Common myeloid progenitor, CD34-positive (primary cell): ENCODE measurements at regions of chr11 and their contacts with region 1.

Region 1: DNA sequence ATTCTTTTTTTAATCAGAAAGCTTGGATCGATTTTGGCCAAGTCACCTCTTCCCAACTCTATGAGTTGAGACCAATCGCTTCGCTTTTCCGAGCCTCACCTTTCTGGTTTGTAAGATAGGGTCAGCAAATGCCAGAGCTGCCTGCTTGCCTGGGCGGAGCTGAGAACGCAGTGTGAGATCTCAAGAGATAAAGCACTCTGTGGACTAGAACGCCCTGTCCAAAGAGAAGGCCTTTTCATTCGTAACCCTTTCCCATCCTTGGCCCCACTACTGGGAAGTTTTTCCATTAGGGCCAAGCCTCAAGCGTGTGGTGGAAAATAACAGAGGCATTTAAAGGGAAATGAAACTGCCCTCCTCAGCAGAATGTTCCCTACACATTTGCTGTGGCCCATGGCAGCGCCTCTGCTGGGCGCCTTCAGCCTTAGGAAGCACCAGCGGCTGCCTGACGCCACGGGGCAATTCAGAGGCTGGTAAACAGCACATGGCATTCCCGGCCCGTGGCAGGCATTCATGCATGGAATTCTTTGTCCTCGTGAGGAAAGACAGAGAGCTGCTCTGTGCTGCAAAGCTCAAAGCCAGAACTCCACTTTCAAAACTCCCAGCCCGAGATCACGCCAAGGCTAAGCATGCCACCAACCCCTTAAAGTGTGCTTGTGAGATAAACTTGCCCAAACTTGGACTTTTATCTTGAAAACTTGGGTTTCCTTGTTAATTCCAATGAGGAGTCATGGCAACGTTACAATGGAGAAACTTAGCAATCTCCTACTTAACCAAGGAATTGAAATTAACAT is 38.1 kb downstream of the AHNAK start:
- DNase-seq: peak in 1 of 3 donors; percentile 46
- H3K4me3 ChIP-seq: peak overlapping the region in 3 of 7 experiments; percentile 32 to 65 (median 38)
- H3K27ac ChIP-seq: peak overlapping the region in 1 of 2 experiments; percentile 3
- H3K4me1 ChIP-seq: peaks cover 3 to 8% (median 5%) of the 10 kb centered on the region in 4 experiments
- H3K27me3 ChIP-seq: peaks cover 0 to 3% (median 0%) of the 10 kb centered on the region in 5 experiments

Region 2: DNA sequence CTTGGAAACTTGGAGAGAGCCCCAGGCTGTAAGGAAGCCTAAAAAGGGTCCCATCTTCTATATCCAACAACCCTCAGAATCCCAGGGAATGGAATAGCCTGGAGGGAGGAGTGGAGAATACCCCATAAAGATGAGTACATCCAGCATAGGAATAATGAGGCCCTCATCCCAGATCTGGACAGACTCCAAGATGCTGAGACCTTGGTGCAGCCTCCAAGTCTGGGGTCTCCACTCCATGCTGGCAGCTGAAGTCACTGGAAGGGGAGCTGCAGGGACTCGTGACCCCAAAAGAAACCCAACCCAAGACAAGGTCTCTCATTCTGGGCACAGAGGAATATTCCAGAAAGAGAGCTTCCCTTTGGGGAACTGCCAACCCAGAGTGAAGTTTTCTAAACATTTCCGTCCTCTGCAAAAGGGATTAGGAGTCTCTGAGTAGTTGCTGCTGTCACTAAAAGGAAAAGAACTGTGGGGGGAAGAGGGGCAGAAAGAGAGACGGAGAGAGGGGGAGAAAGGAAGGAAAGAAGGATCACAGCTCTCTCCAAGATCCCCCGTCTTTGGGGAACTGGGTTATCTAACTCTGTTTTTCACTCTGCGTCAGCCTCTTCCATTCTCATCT is 89.0 kb before region 1 on chr11:
- CTCF ChIA-PET with region 1: interaction called, 11 read pairs
- POLR2A ChIA-PET with region 1: no interaction called
- DNase-seq: no peak
- H3K4me3 ChIP-seq: no peak overlapping the region
- H3K27ac ChIP-seq: peak overlapping the region in 1 of 2 experiments; percentile 34
- H3K4me1 ChIP-seq: peaks cover 0 to 3% (median under 1%) of the 10 kb centered on the region in 4 experiments
- H3K27me3 ChIP-seq: no peaks in the 10 kb centered on the region

Region 3: GRCh38 chr11:62497132-62497915 is 11.1 kb before region 1 on chr11:
- CTCF ChIA-PET with region 1: interaction called, 19 read pairs
- POLR2A ChIA-PET with region 1: no interaction called
- DNase-seq: no peak
- H3K4me3 ChIP-seq: no peak overlapping the region
- H3K27ac ChIP-seq: no peak overlapping the region
- H3K4me1 ChIP-seq: peaks cover 0 to 31% (median 21%) of the 10 kb centered on the region in 4 experiments
- H3K27me3 ChIP-seq: no peaks in the 10 kb centered on the region

Region 4: DNA sequence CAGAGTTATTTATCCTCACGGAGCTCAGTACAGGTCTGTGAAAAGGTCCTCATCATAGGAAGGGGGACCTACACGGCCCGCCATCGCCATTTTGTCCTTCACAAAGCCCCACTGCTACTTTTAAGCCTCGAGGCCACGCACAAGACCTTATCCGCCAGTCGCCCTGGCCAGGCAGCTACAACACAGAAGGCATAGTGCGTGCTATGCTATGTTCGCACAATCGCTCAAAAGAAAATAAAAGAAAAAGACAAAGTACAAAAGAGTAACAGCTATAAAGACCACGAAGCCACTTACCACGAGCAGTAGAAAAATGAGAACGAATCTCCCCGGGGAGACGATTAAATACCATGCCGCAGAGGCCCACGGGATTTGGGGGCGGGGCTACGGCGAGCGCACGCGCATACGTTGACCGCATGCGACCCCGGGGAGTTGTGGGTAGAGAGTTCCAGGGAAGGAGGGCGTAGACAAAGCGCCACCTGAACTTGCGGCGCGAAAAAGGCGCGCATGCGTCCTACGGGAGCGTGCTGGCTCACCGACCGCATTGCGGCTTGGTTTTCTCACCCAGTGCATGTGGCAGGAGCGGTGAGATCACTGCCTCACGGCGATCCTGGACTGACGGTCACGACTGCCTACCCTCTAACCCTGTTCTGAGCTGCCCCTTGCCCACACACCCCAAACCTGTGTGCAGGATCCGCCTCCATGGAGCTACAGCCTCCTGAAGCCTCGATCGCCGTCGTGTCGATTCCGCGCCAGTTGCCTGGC is 347.3 kb after region 1 on chr11:
- CTCF ChIA-PET with region 1: no interaction called
- POLR2A ChIA-PET with region 1: no interaction called
- DNase-seq: peak; percentile 98 to 99 (median 98)
- H3K4me3 ChIP-seq: peak overlapping the region; percentile 79 to 100 (median 97)
- H3K27ac ChIP-seq: peak overlapping the region; percentile 55 to 91
- H3K4me1 ChIP-seq: peaks cover 25 to 54% (median 38%) of the 10 kb centered on the region in 4 experiments
- H3K27me3 ChIP-seq: no peaks in the 10 kb centered on the region